Transverse colon (tissue), 4 donors: ENCODE measurements at regions of chr20 and their contacts with region 1.

Region 1: GRCh38 chr20:47379433-47380150 is 23.1 kb upstream of the ZMYND8 start:
- DNase-seq: no peak
- H3K4me3 ChIP-seq: no peak overlapping the region
- H3K27ac ChIP-seq: no peak overlapping the region
- H3K4me1 ChIP-seq: peaks cover 0 to 5% (median 4%) of the 10 kb centered on the region in 4 donors
- H3K27me3 ChIP-seq: no peaks in the 10 kb centered on the region
- CTCF ChIP-seq: no peak
- EP300 ChIP-seq: no peak
- POLR2A ChIP-seq: no peak

Region 2: DNA sequence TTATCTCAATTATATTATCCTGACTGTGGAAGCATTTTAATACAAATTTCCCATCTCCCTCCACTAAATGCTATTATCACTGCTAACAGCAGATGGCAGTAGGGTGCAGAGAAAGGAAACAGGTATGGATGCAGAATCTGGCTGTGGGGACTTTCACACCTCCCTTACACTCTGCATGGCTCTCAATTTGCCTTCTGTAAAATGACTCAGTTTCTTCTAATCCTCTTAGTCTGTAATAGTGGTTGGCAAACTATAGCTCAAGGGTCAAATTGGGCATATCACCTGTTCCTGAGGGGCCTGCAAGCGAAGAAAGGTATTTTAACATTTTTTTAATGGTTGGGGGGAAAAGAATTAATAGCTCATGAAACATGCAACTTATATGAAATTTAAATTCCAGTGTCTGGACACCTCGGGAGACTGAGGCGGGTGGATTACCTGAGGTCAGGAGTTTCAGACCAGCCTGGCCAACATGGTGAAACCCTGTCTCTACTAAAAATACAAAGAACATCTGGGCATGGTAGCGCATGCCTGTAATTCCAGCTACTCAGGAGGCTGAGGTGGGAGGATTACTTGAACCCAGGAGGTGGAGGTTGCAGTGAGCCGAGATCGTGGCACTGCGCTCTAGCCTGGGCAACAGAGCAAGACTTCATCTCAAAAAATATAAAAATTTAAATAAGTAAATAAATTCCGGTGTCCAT is 106.5 kb before region 1 on chr20:
- in situ Hi-C with region 1: loop called (anchors 5 to 10 kb)
- intact Hi-C with region 1: loop called (anchors 2 kb)
- DNase-seq: peak; percentile 31
- H3K4me3 ChIP-seq: no peak overlapping the region
- H3K27ac ChIP-seq: peak overlapping the region; percentile 77 to 82 (median 80)
- H3K4me1 ChIP-seq: peaks cover 15 to 36% (median 16%) of the 10 kb centered on the region in 4 donors
- H3K27me3 ChIP-seq: no peaks in the 10 kb centered on the region
- CTCF ChIP-seq: peak; percentile 82 to 97 (median 84)
- EP300 ChIP-seq: no peak
- POLR2A ChIP-seq: no peak